Aorta (tissue), 5 donors: ENCODE measurements at regions of chr1 and their contacts with region 1.

Region 1: GRCh38 chr1:103525607-103526507 is at the start of gene RNPC3:
- DNase-seq: peak; percentile 92 to 96
- ATAC-seq: peak; percentile 93
- H3K4me3 ChIP-seq: peak within 1 kb of the TSS; percentile 83 to 96
- H3K27ac ChIP-seq: peak within 1 kb of the TSS; percentile 5 to 97
- H3K4me1 ChIP-seq: no peaks in the 10 kb centered on the region
- H3K27me3 ChIP-seq: no peaks in the 10 kb centered on the region
- total RNA-seq, gene RNPC3: 19.5 to 40.4 TPM

Region 2: DNA sequence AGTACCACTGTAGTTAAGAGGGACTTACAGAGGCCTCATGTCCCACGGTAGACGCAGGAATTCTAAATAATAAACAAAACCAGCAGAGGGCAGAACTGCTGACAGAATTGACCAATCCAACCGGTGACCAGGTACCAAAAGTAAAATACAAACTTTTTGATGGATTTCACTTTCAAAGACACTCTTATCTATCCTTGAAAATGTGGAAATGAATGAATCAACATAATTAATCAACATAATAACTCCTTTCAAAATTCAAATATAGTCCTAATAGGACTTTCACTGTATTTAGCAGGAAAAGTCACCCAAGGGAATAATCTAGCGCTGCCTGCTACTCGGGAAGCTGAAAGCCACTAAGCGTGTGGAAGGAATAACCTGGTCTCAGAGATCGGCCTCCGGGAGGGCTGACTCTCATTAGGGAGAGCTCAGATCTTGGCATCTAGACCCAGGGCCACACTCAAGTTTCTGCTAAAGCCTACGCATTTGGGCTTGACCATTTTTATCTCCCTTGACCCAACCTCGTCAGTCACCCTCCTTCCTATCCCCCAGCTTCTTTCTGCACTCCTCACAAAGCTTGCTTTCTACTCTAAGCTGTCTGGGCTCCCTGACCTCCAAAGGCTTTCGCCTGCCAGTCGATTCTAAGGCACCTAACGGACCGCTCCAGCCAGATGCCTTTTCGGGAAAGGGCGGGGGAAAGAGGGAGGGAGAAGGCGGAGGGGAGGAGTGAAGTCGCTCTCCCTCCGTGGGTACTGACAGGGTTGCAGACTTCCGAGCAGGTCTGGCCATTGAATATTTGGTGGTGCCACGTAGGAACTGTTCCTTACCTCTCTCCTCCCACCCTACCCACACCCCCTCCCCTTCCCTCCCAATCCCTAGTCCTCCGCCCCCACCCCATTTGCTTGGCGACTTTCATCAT is 419.2 kb before region 1 on chr1:
- intact Hi-C with region 1: loop called in 1 of 2 experiments (anchors 10 kb)
- DNase-seq: peak; percentile 42 to 71
- ATAC-seq: peak; percentile 78
- H3K4me3 ChIP-seq: peak overlapping the region; percentile 4 to 27
- H3K27ac ChIP-seq: no peak overlapping the region
- H3K4me1 ChIP-seq: no peaks in the 10 kb centered on the region
- H3K27me3 ChIP-seq: no peaks in the 10 kb centered on the region

Region 3: GRCh38 chr1:104056786-104057185 is 530.9 kb after region 1 on chr1:
- intact Hi-C with region 1: no loop called
- DNase-seq: no peak
- ATAC-seq: no peak
- H3K4me3 ChIP-seq: no peak overlapping the region
- H3K27ac ChIP-seq: no peak overlapping the region
- H3K4me1 ChIP-seq: no peaks in the 10 kb centered on the region
- H3K27me3 ChIP-seq: no peaks in the 10 kb centered on the region